ENCODE measurements at regions of chr12 and their contacts with region 1.

Region 1: GRCh38 chr12:112219195-112219594 is 93.8 kb downstream of the TRAFD1 start:
- DNase-seq: no peak
- ATAC-seq: no peak
- H3K4me3 ChIP-seq: no peak overlapping the region
- H3K27ac ChIP-seq: no peak overlapping the region
- H3K4me1 ChIP-seq: peaks cover 2% of the 10 kb centered on the region; the same call in 1 of the 2 replicates
- H3K27me3 ChIP-seq: no peaks in the 10 kb centered on the region
- CTCF ChIP-seq: no peak
- POLR2A ChIP-seq: no peak
- RAD21 ChIP-seq: no peak

Region 2: DNA sequence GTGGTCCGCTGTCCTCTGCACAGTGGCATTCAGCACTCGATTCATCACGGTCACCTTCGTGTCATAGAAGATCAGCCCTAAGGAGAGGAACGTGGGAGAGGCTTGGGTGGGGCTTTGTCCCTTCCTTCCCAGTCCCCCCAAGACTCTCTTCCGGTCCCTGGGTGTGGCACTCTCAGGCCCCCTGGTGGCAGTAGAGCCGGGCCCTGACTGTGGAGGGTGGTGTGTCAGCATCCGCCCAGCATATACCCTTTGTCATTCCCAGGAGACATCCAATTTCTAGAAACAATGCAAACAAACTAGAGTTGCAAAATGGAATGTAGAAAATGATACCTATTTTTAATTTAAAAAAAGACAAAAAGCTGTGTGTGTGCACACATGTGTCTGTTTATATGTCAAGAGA is 48.8 kb before region 1 on chr12:
- CTCF ChIA-PET with region 1: no interaction called
- POLR2A ChIA-PET with region 1: no interaction called
- dilution Hi-C with region 1: no loop called
- in situ Hi-C with region 1: no loop called
- intact Hi-C with region 1: no loop called
- DNase-seq: no peak
- ATAC-seq: peak; percentile 67
- H3K4me3 ChIP-seq: no peak overlapping the region
- H3K27ac ChIP-seq: no peak overlapping the region
- H3K4me1 ChIP-seq: no peaks in the 10 kb centered on the region
- H3K27me3 ChIP-seq: no peaks in the 10 kb centered on the region
- CTCF ChIP-seq: peak; percentile 45
- POLR2A ChIP-seq: no peak
- RAD21 ChIP-seq: peak; percentile 25; the same call in 1 of the 2 replicates

Region 3: DNA sequence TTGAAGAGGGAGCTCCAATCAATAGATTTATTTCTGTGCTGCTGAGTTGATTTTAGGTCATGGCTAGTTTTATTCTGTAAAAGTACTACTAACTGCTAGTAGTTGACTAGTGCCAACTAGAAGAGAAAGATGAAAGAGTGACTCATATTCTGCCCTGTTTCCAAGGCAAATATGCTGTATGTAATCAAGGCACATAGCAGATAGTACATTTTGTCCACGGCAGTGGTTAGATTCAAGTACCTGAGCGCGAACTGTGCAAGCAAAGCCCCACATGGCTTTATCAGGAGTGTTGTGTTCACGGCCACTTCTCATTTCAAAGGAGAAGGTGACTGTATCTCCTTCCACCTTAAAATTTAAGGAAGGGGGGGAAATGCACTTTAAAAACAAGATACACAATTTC is 33.0 kb after region 1 on chr12:
- CTCF ChIA-PET with region 1: no interaction called
- POLR2A ChIA-PET with region 1: no interaction called
- dilution Hi-C with region 1: no loop called
- in situ Hi-C with region 1: no loop called
- intact Hi-C with region 1: loop called (anchors 2 kb)
- DNase-seq: peak; percentile 59
- ATAC-seq: peak; percentile 66
- H3K4me3 ChIP-seq: no peak overlapping the region
- H3K27ac ChIP-seq: no peak overlapping the region
- H3K4me1 ChIP-seq: no peaks in the 10 kb centered on the region
- H3K27me3 ChIP-seq: no peaks in the 10 kb centered on the region
- CTCF ChIP-seq: no peak
- POLR2A ChIP-seq: no peak
- RAD21 ChIP-seq: no peak

Measured in IMR-90 (cell line).